IMR-90 (cell line): ENCODE measurements at regions of chr12 and their contacts with region 1.

Region 1: GRCh38 chr12:116577154-116577561 is 18.0 kb downstream of the MAP1LC3B2 start:
- DNase-seq: peak; percentile 41
- ATAC-seq: no peak
- H3K4me3 ChIP-seq: no peak overlapping the region
- H3K27ac ChIP-seq: no peak overlapping the region
- H3K4me1 ChIP-seq: no peaks in the 10 kb centered on the region
- H3K27me3 ChIP-seq: no peaks in the 10 kb centered on the region
- CTCF ChIP-seq: no peak
- POLR2A ChIP-seq: no peak
- RAD21 ChIP-seq: no peak

Region 2: DNA sequence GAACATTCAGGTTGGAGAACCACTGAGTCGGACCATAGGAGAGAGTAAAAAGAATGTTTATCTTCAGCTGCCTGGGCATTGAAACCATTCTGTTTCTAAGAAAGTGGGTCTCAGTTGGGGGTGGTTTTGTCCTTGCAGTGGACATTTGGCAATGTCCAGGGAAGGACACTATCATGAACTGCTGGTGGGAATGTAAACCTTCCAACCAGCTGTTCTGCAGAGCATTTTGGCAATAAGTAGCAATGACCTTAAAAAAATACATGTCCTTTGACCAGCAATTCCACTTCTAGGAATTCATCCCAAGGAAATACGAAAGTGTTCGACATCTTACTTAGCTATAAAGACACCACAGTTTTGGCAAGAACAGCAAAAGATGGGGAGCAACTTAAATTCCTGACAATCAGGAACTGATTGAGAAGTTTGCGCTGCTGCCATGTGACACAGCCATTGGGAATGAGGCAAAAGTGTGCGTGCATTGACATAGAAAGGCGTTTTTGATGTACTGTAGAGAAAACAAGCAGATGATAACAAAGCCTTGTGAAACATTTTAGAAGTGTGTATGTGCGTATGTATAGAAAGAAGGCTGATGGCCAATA is 100.8 kb before region 1 on chr12:
- CTCF ChIA-PET with region 1: no interaction called
- POLR2A ChIA-PET with region 1: no interaction called
- dilution Hi-C with region 1: no loop called
- in situ Hi-C with region 1: no loop called
- intact Hi-C with region 1: loop called (anchors 5 kb)
- DNase-seq: peak; percentile 28
- ATAC-seq: no peak
- H3K4me3 ChIP-seq: no peak overlapping the region
- H3K27ac ChIP-seq: no peak overlapping the region
- H3K4me1 ChIP-seq: peaks cover 2% of the 10 kb centered on the region; the same call in 1 of the 2 replicates
- H3K27me3 ChIP-seq: peaks cover 4% of the 10 kb centered on the region
- CTCF ChIP-seq: no peak
- POLR2A ChIP-seq: no peak
- RAD21 ChIP-seq: no peak

Region 3: GRCh38 chr12:116556964-116557698 is 20.0 kb before region 1 on chr12:
- CTCF ChIA-PET with region 1: interaction called, 3 read pairs
- POLR2A ChIA-PET with region 1: no interaction called
- dilution Hi-C with region 1: no loop called
- in situ Hi-C with region 1: no loop called
- intact Hi-C with region 1: loop called (anchors 2 kb)
- DNase-seq: peak; percentile 26
- ATAC-seq: no peak
- H3K4me3 ChIP-seq: no peak overlapping the region
- H3K27ac ChIP-seq: no peak overlapping the region
- H3K4me1 ChIP-seq: peaks cover 2% of the 10 kb centered on the region; the same call in 1 of the 2 replicates
- H3K27me3 ChIP-seq: no peaks in the 10 kb centered on the region
- CTCF ChIP-seq: no peak
- POLR2A ChIP-seq: no peak
- RAD21 ChIP-seq: no peak

Region 4: DNA sequence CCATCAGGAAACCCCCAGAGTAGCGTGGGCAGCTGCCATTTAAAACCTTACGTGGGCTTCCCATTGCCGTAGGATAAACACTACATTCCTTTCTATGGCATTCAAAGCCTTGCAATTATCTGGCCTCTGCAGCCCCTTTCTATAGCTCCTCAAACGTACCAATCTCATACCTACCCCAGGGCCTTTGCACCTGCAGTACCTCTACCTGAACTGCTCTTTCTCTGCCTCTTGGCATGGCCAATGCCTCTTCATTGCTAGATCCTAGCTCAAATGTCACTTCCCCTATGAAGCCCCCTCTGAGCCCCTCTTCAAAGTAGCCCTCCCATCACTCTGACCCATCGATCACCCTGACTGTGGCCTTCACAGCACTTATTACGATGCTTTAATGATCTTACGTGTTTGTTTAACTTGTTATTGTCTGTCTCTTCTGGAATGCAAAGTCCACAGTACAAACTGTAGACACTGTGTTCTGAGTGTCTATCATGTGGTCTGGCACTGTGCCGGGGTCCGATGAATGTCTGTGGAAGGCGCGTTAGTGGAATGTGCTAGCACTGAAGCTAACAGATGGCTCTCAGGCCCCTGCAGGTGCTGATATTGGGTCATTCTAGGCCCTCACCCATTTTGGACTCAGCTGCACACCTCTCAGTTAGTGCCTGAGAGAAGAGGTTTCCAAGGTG is 941.6 kb after region 1 on chr12:
- CTCF ChIA-PET with region 1: no interaction called
- POLR2A ChIA-PET with region 1: no interaction called
- dilution Hi-C with region 1: no loop called
- in situ Hi-C with region 1: no loop called
- intact Hi-C with region 1: no loop called
- DNase-seq: no peak
- ATAC-seq: no peak
- H3K4me3 ChIP-seq: no peak overlapping the region
- H3K27ac ChIP-seq: no peak overlapping the region
- H3K4me1 ChIP-seq: no peaks in the 10 kb centered on the region
- H3K27me3 ChIP-seq: no peaks in the 10 kb centered on the region
- CTCF ChIP-seq: no peak
- POLR2A ChIP-seq: no peak
- RAD21 ChIP-seq: no peak